ENCODE measurements at regions of chr11 and their contacts with region 1.

Region 1: DNA sequence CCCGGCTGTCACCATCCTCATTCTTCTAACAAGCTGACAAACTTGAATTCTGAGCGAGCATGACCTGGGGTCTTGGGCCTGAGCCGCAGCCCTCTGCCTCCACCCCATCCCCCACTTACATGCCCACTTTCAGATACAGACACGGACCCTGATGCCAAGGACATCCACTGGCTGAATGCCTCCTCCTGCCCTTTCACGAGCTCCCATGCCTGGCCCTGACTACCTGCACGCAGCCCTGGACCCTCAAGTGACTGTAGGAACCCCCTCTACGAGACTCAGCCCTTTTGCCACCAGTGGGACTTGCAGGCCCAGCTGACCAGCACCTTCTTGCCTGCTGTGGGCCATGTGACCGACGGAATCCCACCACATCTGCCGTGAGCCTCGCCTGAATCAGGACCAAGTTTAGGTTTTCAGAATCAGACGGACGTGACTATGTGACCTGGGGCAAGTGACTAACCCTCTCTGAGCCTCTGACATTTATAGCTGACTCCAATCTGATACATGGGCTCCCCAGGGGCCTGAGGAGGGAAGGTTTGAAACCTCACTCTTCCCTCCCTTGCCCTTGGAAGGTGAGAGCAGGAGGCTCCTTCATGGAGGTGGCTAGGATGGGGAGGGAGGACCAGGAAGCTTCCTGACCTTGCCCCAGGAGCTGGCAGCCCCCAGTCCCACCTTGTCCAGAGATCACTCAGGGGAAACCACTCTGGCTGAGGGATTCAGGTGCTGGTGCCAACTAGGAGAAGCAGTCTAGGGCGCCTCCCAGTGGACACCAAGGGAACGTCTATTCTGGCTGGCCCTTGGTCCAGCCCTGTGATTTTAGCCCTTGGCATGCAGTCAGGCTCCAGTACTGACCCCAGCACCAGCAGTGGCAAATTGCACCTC is 46.9 kb upstream of the SYT7 start:
- DNase-seq: peak in 1 of 2 experiments; percentile 92
- H3K4me3 ChIP-seq: no peak overlapping the region
- H3K27ac ChIP-seq: peak overlapping the region; percentile 76; the same call in 1 of the 2 replicates
- H3K4me1 ChIP-seq: peaks cover 6 to 25% (median 18%) of the 10 kb centered on the region in 4 experiments
- H3K27me3 ChIP-seq: no peaks in the 10 kb centered on the region
- CTCF ChIP-seq: peak; percentile 89 to 99 (median 97)
- EP300 ChIP-seq: no peak
- POLR2A ChIP-seq: no peak
- RAD21 ChIP-seq: peak; percentile 94 to 97

Region 2: GRCh38 chr11:61477727-61478148 is 150.1 kb before region 1 on chr11:
- CTCF ChIA-PET with region 1: interaction called, 33 read pairs
- POLR2A ChIA-PET with region 1: interaction called, 3 read pairs
- DNase-seq: peak; percentile 47 to 94
- H3K4me3 ChIP-seq: no peak overlapping the region
- H3K27ac ChIP-seq: no peak overlapping the region
- H3K4me1 ChIP-seq: peaks cover 0 to 16% (median 8%) of the 10 kb centered on the region in 4 experiments; a peak in 5 of 7 replicates
- H3K27me3 ChIP-seq: no peaks in the 10 kb centered on the region
- CTCF ChIP-seq: peak; percentile 78 to 97 (median 89)
- EP300 ChIP-seq: no peak
- POLR2A ChIP-seq: no peak
- RAD21 ChIP-seq: peak; percentile 94 to 96

Region 3: GRCh38 chr11:61532139-61533038 is 95.4 kb before region 1 on chr11:
- CTCF ChIA-PET with region 1: interaction called, 29 read pairs
- POLR2A ChIA-PET with region 1: no interaction called
- DNase-seq: peak in 1 of 2 experiments; percentile 90
- H3K4me3 ChIP-seq: no peak overlapping the region
- H3K27ac ChIP-seq: no peak overlapping the region
- H3K4me1 ChIP-seq: peaks cover 0 to 11% (median 4%) of the 10 kb centered on the region in 4 experiments; a peak in 5 of 7 replicates
- H3K27me3 ChIP-seq: no peaks in the 10 kb centered on the region
- CTCF ChIP-seq: peak in 2 of 3 experiments; percentile 89 to 94; a peak in 3 of 4 replicates
- EP300 ChIP-seq: no peak
- POLR2A ChIP-seq: no peak
- RAD21 ChIP-seq: peak; percentile 69 to 81

Region 4: DNA sequence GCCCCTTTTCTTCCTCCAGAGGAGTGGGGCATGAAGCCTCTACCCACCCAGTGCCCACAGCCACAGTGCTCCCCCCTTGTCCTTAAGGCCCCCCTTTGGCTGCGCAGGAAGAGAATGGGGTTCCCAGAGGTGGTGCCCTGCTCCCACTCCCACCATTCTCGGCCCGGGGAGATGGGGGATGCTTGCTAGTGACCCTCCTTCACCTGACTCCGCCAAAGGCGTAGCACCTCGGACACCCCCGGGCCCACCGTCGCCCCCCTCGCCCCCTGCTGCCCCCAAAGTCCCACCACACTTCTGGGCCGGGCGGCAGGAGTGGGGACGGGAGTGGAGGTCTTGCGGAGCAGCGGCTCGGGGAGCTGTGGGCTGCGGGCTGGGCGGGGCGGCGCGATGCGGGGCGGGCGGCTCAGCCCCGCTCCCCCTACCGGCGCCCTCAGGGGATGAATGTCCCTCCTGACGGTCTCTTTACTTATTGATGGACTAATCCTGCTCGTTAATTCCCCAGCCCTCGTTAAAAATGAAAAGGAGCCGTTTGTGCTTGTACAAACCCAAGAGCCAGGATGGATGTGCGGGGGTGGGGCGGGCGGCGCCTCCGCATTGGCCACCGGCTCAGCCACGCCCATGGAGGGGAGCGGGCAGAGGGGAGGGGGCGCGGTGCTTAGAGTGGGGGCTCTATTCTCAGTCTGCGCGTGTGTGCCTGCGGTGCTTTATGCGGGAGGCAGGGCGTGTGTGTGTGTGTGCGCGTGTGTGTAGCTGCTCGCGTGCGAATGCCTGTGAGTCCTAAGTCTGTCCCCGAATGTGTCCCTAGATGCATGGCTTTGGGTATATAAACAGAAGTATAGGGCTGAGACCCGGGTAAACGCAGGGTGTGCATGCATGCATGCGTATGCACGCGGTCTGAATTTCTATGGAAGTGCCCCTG is 72.5 kb before region 1 on chr11:
- CTCF ChIA-PET with region 1: interaction called, 14 read pairs
- POLR2A ChIA-PET with region 1: no interaction called
- DNase-seq: peak in 1 of 2 experiments; percentile 72
- H3K4me3 ChIP-seq: peak overlapping the region; percentile 11 to 62 (median 34); a peak in 7 of 8 replicates
- H3K27ac ChIP-seq: no peak overlapping the region
- H3K4me1 ChIP-seq: peaks cover 0 to 27% (median 14%) of the 10 kb centered on the region in 4 experiments; a peak in 4 of 7 replicates
- H3K27me3 ChIP-seq: peaks cover 0 to 21% (median 20%) of the 10 kb centered on the region in 4 experiments; a peak in 6 of 7 replicates
- CTCF ChIP-seq: peak; percentile 32 to 45 (median 38); a peak in 3 of 4 replicates
- EP300 ChIP-seq: no peak
- POLR2A ChIP-seq: no peak
- RAD21 ChIP-seq: peak in 1 of 2 experiments; percentile 16; a peak in 1 of 4 replicates

Region 5: GRCh38 chr11:61581030-61581928 is 46.5 kb before region 1 on chr11 and contains the start of gene SYT7:
- CTCF ChIA-PET with region 1: interaction called, 335 read pairs
- POLR2A ChIA-PET with region 1: interaction called, 6 read pairs
- DNase-seq: peak; percentile 89 to 100
- H3K4me3 ChIP-seq: peak within 1 kb of the TSS; percentile 46 to 85 (median 64)
- H3K27ac ChIP-seq: no peak within 1 kb of the TSS
- H3K4me1 ChIP-seq: peaks cover 4 to 41% (median 31%) of the 10 kb centered on the region in 4 experiments
- H3K27me3 ChIP-seq: peaks cover 2 to 32% (median 26%) of the 10 kb centered on the region in 4 experiments
- CTCF ChIP-seq: peak in 1 of 3 experiments; percentile 9; a peak in 1 of 4 replicates
- EP300 ChIP-seq: peak in 1 of 2 experiments; percentile 67; a peak in 1 of 3 replicates
- POLR2A ChIP-seq: no peak
- RAD21 ChIP-seq: peak; percentile 1 to 9; a peak in 1 of 4 replicates
- total RNA-seq, gene SYT7: 10.5 and 10.6 TPM in 2 replicates

Region 6: GRCh38 chr11:61609980-61610366 is 17.8 kb before region 1 on chr11:
- CTCF ChIA-PET with region 1: interaction called, 73 read pairs
- POLR2A ChIA-PET with region 1: interaction called, 4 read pairs
- DNase-seq: no peak
- H3K4me3 ChIP-seq: no peak overlapping the region
- H3K27ac ChIP-seq: no peak overlapping the region
- H3K4me1 ChIP-seq: peaks cover 0 to 3% (median 2%) of the 10 kb centered on the region in 4 experiments; a peak in 4 of 7 replicates
- H3K27me3 ChIP-seq: no peaks in the 10 kb centered on the region
- CTCF ChIP-seq: peak; percentile 72 to 75 (median 75)
- EP300 ChIP-seq: no peak
- POLR2A ChIP-seq: no peak
- RAD21 ChIP-seq: peak; percentile 54 to 72

Region 7: DNA sequence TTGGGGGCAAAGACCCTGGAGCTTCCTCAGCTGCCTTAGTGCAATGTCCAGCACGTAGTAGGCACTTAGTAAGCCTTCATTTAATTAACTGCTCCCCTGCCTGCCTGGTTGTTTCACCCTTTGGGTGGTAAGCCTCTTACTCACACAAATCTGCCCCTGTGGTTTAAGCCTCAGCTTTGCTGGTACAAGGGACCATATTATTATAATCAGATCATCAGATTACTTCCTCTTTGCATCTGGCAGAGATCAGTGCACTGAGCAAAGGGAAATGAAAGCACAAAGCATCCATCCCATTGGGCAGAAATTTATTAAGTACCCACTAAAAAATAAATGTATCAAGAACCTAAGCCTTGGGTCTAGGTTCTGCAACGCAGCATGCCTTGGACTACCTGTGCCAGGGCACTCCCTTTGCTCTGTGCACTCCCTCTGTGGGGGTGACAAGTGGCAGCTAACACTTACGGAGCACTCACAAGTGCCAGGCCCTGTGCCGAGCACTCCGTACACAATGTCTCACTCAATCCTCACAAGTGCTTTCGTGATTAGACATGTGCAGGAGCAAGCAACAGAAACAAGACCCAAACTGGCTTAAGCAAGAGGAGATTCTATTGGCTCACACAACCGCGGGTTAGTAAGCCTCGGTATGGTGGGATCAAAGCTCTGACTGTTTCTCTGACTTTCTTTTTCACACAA is 17.5 kb after region 1 on chr11:
- CTCF ChIA-PET with region 1: interaction called, 63 read pairs
- POLR2A ChIA-PET with region 1: no interaction called
- DNase-seq: no peak
- H3K4me3 ChIP-seq: no peak overlapping the region
- H3K27ac ChIP-seq: no peak overlapping the region
- H3K4me1 ChIP-seq: peaks cover 0 to 3% (median 0%) of the 10 kb centered on the region in 4 experiments; a peak in 1 of 7 replicates
- H3K27me3 ChIP-seq: no peaks in the 10 kb centered on the region
- CTCF ChIP-seq: no peak
- EP300 ChIP-seq: no peak
- POLR2A ChIP-seq: no peak
- RAD21 ChIP-seq: no peak

Region 8: GRCh38 chr11:61792310-61793085 is 164.7 kb after region 1 on chr11 and contains the starts of genes FEN1 and TMEM258:
- CTCF ChIA-PET with region 1: no interaction called
- POLR2A ChIA-PET with region 1: no interaction called
- DNase-seq: peak; percentile 80 to 95
- H3K4me3 ChIP-seq: peak within 1 kb of the TSS; percentile 86 to 99 (median 98)
- H3K27ac ChIP-seq: peak within 1 kb of the TSS; percentile 100
- H3K4me1 ChIP-seq: peaks cover 0 to 4% (median 0%) of the 10 kb centered on the region in 4 experiments; a peak in 1 of 7 replicates
- H3K27me3 ChIP-seq: no peaks in the 10 kb centered on the region
- CTCF ChIP-seq: peak in 1 of 3 experiments; percentile 4; a peak in 1 of 4 replicates
- EP300 ChIP-seq: no peak
- POLR2A ChIP-seq: peak; percentile 57 to 82
- RAD21 ChIP-seq: no peak
- total RNA-seq, gene FEN1: 84.5 and 86.1 TPM in 2 replicates
- total RNA-seq, gene TMEM258: 186 and 191 TPM in 2 replicates

Measured in H1 (cell line).